ENCODE measurements at regions of chr4 and their contacts with region 1.

Region 1: GRCh38 chr4:26583865-26584652 is at the start of gene TBC1D19:
- DNase-seq: peak; percentile 85
- H3K4me3 Mint-ChIP-seq: peak within 1 kb of the TSS; percentile 93
- H3K27ac Mint-ChIP-seq: peak within 1 kb of the TSS; percentile 93
- H3K4me1 Mint-ChIP-seq: peaks cover 37% of the 10 kb centered on the region
- H3K27me3 Mint-ChIP-seq: peaks cover 2% of the 10 kb centered on the region
- total RNA-seq, gene TBC1D19: 4.3 and 4.7 TPM in 2 replicates

Region 2: GRCh38 chr4:25913851-25914669 is 670.0 kb before region 1 on chr4 and contains the start of gene SMIM20:
- intact Hi-C with region 1: loop called (anchors 1 kb)
- DNase-seq: peak; percentile 88
- H3K4me3 Mint-ChIP-seq: peak within 1 kb of the TSS; percentile 94
- H3K27ac Mint-ChIP-seq: peak within 1 kb of the TSS; percentile 99
- H3K4me1 Mint-ChIP-seq: peaks cover 24% of the 10 kb centered on the region
- H3K27me3 Mint-ChIP-seq: peaks cover 5% of the 10 kb centered on the region
- total RNA-seq, gene SMIM20: 19.2 and 21.5 TPM in 2 replicates

Region 3: DNA sequence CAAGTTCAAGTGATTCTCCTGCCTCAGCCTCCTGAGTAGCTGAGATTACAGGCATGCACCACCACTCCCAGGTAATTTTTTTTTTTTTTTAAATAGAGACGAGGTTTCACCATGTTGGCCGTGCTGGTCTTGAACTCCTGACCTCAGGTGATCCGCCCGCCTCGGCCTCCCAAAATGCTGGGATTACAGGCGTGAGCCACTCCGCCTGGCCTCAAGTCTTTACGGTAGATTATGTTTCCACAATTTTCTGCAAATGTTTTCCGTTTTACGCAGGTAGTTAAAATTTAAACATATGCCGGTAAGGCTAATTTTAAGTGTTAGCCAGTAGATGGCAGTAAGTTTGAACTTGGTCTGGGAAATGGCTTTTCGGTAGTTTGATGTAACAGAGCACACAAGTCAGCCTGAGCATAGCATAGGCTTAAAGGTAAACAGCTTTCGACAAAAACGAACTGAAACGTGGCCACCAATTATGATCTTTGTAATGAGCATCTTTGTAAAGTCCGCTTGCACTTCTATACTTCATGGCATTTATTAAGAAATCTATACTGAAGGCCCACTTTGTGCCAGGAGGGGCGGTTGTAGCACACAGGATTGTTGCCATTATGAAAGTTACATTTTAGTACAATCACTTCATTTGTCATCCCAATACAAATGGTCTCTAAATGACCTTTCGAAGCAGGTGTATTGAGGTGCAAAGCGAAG is 124.9 kb before region 1 on chr4:
- intact Hi-C with region 1: loop called (anchors 5 kb)
- DNase-seq: no peak
- H3K4me3 Mint-ChIP-seq: no peak overlapping the region
- H3K27ac Mint-ChIP-seq: no peak overlapping the region
- H3K4me1 Mint-ChIP-seq: peaks cover 13% of the 10 kb centered on the region
- H3K27me3 Mint-ChIP-seq: peaks cover 2% of the 10 kb centered on the region

Region 4: DNA sequence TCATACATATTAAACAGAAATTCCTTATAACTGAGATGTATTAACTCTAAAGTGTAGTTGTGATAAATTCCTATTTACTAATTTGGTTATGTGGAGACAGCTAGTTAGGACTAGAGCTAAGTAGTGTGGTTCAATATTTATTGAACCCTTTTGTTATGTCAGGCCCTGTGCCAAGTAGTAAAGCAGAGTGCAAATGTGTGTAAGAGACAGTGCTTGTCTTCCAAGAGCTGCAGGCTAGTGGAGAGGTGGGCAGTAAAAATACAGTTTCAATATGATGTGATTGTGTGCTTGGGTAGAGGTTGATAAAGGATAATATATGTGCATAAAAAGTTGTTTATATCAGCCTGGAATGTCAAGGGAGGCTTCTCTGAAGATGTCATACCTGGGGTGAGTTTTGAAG is 79.8 kb after region 1 on chr4:
- intact Hi-C with region 1: no loop called
- DNase-seq: no peak
- H3K4me3 Mint-ChIP-seq: no peak overlapping the region
- H3K27ac Mint-ChIP-seq: no peak overlapping the region
- H3K4me1 Mint-ChIP-seq: no peaks in the 10 kb centered on the region
- H3K27me3 Mint-ChIP-seq: no peaks in the 10 kb centered on the region

Region 5: DNA sequence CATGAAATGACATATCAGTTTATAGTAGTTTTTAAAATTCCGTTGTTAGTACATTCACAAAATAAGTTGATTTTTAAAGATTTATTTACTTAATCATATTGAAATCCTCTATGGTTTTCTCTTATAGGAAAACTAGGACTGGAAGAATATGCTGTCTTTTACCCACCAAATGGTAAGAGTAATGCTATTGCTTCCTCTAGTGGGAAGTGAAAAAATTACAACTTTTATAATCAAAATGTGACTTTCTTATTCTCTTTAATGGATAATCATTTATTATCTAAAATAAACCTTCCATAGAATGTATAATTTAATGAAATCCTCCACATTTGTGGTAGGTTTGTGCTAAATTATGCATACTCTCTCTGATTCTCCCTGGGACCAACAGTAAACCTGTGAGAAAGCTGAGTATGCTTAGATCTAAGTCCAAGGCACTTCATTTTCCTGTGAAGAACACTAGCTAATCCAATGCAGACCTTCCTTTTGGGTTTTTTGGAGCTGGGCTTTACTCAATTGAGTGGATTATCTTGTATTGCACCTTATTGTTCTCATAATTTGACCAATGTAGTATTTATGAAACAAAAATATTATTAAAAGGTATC is 136.0 kb after region 1 on chr4:
- intact Hi-C with region 1: loop called (anchors 5 kb)
- DNase-seq: no peak
- H3K4me3 Mint-ChIP-seq: no peak overlapping the region
- H3K27ac Mint-ChIP-seq: no peak overlapping the region
- H3K4me1 Mint-ChIP-seq: no peaks in the 10 kb centered on the region
- H3K27me3 Mint-ChIP-seq: peaks cover 2% of the 10 kb centered on the region

Measured in activated T-helper 1 cell treated with anti-CD3 and anti-CD28 coated beads, Interleukin-12 subunit alpha, Interleukin-12 subunit beta, Interleukin-2, Interleukin-4 antibody, amounts not matched to agents 30 ng/mL and 10 ng/mL and 1 ng/mL, durations not matched to agents 14 hours and 24 hours and 36 hours (primary cell).